ENCODE measurements at regions of chr7 and their contacts with region 1.

Region 1: DNA sequence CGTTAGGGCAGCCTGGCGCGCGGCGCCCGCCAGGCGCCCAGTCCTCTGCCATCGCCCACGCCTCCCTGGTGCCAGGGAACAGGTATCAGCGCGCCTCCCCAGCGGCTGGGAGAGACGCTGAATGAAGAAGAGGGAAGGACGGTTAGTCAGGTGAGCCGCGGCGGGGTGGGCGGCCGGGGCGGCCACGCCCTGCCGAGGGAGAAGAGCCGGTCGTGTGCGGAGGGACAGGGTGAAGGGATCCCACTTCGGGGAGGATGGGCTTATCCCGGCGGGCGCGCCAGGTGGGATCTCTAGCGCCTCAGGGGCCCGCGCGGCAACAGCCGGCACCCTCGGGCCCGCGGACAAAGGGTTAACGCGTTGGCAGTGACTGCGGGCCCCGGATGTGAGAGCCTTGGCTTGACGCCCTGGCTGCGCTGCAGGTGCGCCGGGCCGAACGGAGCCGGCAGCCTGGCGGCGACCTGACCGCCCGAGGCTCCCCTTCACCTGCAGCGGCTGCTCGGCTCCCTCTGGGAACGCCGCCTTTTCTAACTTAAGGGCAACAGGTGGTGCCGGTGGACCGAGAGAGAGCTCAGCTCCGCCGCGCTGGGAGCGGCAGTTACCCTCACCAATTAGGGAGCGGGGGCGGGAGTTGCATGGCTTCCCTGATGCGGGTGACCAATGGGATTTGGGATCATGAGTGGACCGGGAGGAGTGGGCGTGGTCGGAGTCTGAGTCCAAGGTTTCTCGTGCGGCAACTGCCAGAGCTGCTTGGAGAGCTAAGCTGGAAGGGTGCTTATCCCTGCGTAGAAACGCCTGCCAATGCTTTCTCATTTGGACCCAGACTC is at the start of gene ARL4A:
- DNase-seq: peak; percentile 100
- H3K4me3 Mint-ChIP-seq: peak within 1 kb of the TSS; percentile 78
- H3K27ac Mint-ChIP-seq: peak within 1 kb of the TSS; percentile 86
- H3K4me1 Mint-ChIP-seq: peaks cover 50% of the 10 kb centered on the region
- H3K27me3 Mint-ChIP-seq: no peaks in the 10 kb centered on the region
- CTCF ChIP-seq: peak; percentile 10
- total RNA-seq, gene ARL4A: 30.6 and 31.9 TPM in 2 replicates

Region 2: GRCh38 chr7:12357508-12357907 is 329.6 kb before region 1 on chr7:
- CTCF ChIA-PET with region 1: no interaction called
- intact Hi-C with region 1: no loop called
- DNase-seq: no peak
- H3K4me3 Mint-ChIP-seq: no peak overlapping the region
- H3K27ac Mint-ChIP-seq: no peak overlapping the region
- H3K4me1 Mint-ChIP-seq: no peaks in the 10 kb centered on the region
- H3K27me3 Mint-ChIP-seq: no peaks in the 10 kb centered on the region
- CTCF ChIP-seq: no peak

Region 3: GRCh38 chr7:12524794-12525386 is 162.2 kb before region 1 on chr7:
- CTCF ChIA-PET with region 1: no interaction called
- intact Hi-C with region 1: loop called (anchors 5 kb)
- DNase-seq: no peak
- H3K4me3 Mint-ChIP-seq: no peak overlapping the region
- H3K27ac Mint-ChIP-seq: peak overlapping the region; percentile 45
- H3K4me1 Mint-ChIP-seq: no peaks in the 10 kb centered on the region
- H3K27me3 Mint-ChIP-seq: no peaks in the 10 kb centered on the region
- CTCF ChIP-seq: peak; percentile 59

Region 4: DNA sequence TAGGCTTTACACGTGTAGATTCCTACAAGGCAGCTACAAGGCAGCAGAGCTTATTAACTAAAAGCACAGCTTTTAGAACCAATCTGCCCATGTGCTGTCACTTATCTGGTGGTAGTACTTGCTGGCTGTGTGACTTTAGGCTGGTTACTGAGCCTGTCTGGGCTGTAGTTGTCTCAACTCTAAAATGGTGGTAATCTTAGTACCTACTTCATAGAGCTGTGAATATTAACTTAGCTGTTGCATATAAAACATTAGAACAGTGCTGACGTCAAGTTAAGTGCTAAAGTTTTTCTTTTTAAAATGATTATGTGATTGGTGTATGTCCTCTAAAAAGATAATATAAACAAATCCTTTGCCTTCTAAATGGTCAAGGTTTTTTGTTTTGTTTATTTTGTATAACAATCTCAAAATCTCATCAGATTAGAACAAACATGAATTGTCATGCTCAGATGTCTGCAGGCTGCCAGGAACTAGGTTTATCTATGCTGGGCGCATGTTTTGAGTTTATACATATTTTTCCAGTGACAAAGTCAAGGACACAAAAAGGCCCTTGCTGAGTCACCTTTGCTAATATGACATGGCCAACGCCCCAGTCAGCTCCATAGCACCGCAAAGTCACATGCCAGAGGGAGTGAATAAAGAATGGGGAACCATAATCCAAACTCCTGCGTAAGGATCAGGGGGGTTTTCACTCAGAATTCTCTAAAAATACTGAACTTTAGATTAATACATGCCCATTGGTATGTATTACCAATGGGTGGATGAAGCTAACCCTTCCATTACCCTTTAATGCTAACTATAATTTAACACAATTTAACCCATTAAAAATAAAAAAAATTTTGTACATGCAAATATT is 39.5 kb before region 1 on chr7:
- CTCF ChIA-PET with region 1: interaction called, 17 read pairs
- intact Hi-C with region 1: loop called (anchors 2 kb)
- DNase-seq: peak; percentile 81
- H3K4me3 Mint-ChIP-seq: no peak overlapping the region
- H3K27ac Mint-ChIP-seq: peak overlapping the region; percentile 81
- H3K4me1 Mint-ChIP-seq: peaks cover 60% of the 10 kb centered on the region
- H3K27me3 Mint-ChIP-seq: no peaks in the 10 kb centered on the region
- CTCF ChIP-seq: no peak

Region 5: DNA sequence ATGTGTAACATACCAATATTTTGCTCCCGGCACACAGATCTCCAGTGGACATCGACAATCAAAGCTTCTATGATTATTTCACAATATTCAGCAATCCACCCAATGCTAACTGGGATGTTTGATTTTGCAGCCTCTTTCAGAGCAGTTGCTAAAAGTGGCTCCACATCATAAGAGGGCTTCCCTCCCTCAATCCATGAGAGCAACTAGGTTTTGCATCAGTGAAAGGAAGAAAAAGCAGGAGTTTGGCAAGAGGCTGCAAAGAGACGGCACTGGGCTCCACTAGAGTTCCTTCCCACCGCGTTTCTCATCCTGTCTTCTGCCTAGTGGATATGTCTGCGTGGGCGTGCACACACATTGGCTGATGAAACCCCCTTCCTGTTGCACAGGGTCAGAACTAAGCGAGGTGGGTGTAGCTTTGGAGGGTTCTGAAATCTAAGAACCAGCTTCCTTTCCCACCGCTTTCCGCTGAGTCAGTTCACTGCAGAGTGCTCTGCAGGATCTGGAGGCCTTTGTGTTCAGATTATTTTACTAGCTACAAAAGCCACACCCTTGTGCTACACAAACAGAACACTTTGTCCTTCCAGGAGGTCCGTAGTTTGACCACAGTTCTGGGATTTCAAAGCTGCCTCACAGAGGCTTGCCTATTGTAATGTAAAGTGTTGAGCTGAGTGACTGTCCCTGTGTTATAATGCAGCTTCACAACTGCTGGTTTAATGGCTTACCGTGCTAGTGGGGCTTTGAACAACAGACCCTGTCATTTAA is 28.4 kb after region 1 on chr7:
- CTCF ChIA-PET with region 1: interaction called, 26 read pairs
- intact Hi-C with region 1: loop called (anchors 2 kb)
- DNase-seq: peak; percentile 69
- H3K4me3 Mint-ChIP-seq: peak overlapping the region; percentile 61
- H3K27ac Mint-ChIP-seq: peak overlapping the region; percentile 45
- H3K4me1 Mint-ChIP-seq: peaks cover 55% of the 10 kb centered on the region
- H3K27me3 Mint-ChIP-seq: no peaks in the 10 kb centered on the region
- CTCF ChIP-seq: no peak

Region 6: GRCh38 chr7:13017333-13017853 is 330.3 kb after region 1 on chr7:
- CTCF ChIA-PET with region 1: interaction called, 10 read pairs
- intact Hi-C with region 1: loop called (anchors 5 kb)
- DNase-seq: no peak
- H3K4me3 Mint-ChIP-seq: peak overlapping the region; percentile 35
- H3K27ac Mint-ChIP-seq: peak overlapping the region; percentile 33
- H3K4me1 Mint-ChIP-seq: peaks cover 26% of the 10 kb centered on the region
- H3K27me3 Mint-ChIP-seq: no peaks in the 10 kb centered on the region
- CTCF ChIP-seq: no peak

Region 7: DNA sequence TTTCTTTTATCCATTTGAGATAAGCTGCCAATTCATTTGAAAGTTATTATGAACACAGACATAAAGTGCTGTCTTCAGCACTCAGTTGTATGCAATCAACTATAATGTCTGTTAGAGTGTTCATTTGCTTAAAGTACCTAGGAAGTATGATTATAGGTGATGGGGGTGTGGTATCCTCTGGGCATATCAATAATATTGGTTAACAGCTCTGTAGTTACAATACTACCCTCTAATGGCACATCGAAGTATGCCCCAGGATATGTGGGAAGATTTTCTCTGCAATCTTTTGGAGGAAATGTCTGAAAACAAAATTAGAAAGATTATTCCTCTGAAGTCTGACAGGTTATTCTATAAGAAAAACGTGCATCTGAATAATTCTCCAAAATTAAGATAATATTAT is 430.0 kb after region 1 on chr7:
- CTCF ChIA-PET with region 1: interaction called, 54 read pairs
- intact Hi-C with region 1: loop called (anchors 1 kb)
- DNase-seq: peak; percentile 20
- H3K4me3 Mint-ChIP-seq: no peak overlapping the region
- H3K27ac Mint-ChIP-seq: no peak overlapping the region
- H3K4me1 Mint-ChIP-seq: peaks cover 16% of the 10 kb centered on the region
- H3K27me3 Mint-ChIP-seq: no peaks in the 10 kb centered on the region
- CTCF ChIP-seq: peak; percentile 63

Region 8: DNA sequence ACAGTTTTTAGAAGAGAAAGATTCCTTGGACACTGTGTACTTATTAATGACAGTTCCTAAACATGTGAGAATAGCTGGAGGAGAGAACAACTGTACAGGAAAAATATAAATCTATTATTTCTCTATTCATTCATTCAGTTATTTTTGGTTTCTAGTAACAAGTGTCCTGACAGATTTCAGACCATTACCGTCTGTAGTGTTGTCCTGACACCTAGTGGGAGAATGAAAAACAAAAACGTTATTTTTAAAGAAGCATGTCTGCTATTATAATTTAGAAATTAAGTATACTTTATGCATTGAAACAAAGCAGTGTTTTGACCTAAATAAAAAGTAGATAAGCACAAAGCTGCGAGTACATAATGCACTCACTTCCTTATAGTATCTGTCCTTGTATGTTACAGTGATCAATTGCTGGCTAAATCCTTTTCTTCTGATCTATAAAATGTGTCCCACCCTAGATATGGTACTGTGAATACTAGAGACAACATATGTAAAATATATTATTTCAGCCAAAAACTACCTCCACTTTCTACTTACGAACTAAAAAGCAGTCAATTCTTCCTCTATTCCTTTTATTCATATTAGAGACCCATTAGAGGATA is 575.9 kb after region 1 on chr7:
- CTCF ChIA-PET with region 1: interaction called, 18 read pairs
- intact Hi-C with region 1: loop called (anchors 1 kb)
- DNase-seq: peak; percentile 25
- H3K4me3 Mint-ChIP-seq: no peak overlapping the region
- H3K27ac Mint-ChIP-seq: no peak overlapping the region
- H3K4me1 Mint-ChIP-seq: no peaks in the 10 kb centered on the region
- H3K27me3 Mint-ChIP-seq: peaks cover 12% of the 10 kb centered on the region
- CTCF ChIP-seq: peak; percentile 74

Measured in Calu3 (cell line).